HCT116 (cell line): ENCODE measurements at regions of chr1 and their contacts with region 1.

Region 1: GRCh38 chr1:86687595-86687994 is 16.8 kb upstream of the SH3GLB1 start:
- DNase-seq: no peak
- ATAC-seq: peak; percentile 42; the same call in 1 of the 2 replicates
- H3K4me3 ChIP-seq: no peak overlapping the region
- H3K27ac ChIP-seq: no peak overlapping the region
- H3K4me1 ChIP-seq: no peaks in the 10 kb centered on the region
- H3K27me3 ChIP-seq: no peaks in the 10 kb centered on the region
- CTCF ChIP-seq: peak in 1 of 3 experiments; percentile 59; a peak in 2 of 6 replicates
- POLR2A ChIP-seq: no peak
- RAD21 ChIP-seq: peak; percentile 59

Region 2: GRCh38 chr1:86380257-86380861 is 307.2 kb before region 1 on chr1:
- CTCF ChIA-PET with region 1: interaction called, 4 read pairs
- POLR2A ChIA-PET with region 1: no interaction called
- RAD21 ChIA-PET with region 1: no interaction called
- intact Hi-C with region 1: loop called (anchors 5 kb)
- DNase-seq: peak; percentile 71
- ATAC-seq: peak; percentile 61
- H3K4me3 ChIP-seq: no peak overlapping the region
- H3K27ac ChIP-seq: no peak overlapping the region
- H3K4me1 ChIP-seq: no peaks in the 10 kb centered on the region
- H3K27me3 ChIP-seq: no peaks in the 10 kb centered on the region
- CTCF ChIP-seq: peak; percentile 62 to 70 (median 70)
- POLR2A ChIP-seq: no peak
- RAD21 ChIP-seq: peak; percentile 80

Region 3: GRCh38 chr1:86419277-86419903 is 268.2 kb before region 1 on chr1:
- CTCF ChIA-PET with region 1: no interaction called
- POLR2A ChIA-PET with region 1: no interaction called
- RAD21 ChIA-PET with region 1: no interaction called
- intact Hi-C with region 1: loop called (anchors 5 kb)
- DNase-seq: no peak
- ATAC-seq: peak; percentile 92
- H3K4me3 ChIP-seq: no peak overlapping the region
- H3K27ac ChIP-seq: no peak overlapping the region
- H3K4me1 ChIP-seq: no peaks in the 10 kb centered on the region
- H3K27me3 ChIP-seq: no peaks in the 10 kb centered on the region
- CTCF ChIP-seq: peak; percentile 53 to 69 (median 64); a peak in 5 of 6 replicates
- POLR2A ChIP-seq: no peak
- RAD21 ChIP-seq: peak; percentile 66

Region 4: GRCh38 chr1:86470859-86471258 is 216.7 kb before region 1 on chr1:
- CTCF ChIA-PET with region 1: interaction called, 3 read pairs
- POLR2A ChIA-PET with region 1: no interaction called
- RAD21 ChIA-PET with region 1: no interaction called
- intact Hi-C with region 1: loop called (anchors 5 kb)
- DNase-seq: no peak
- ATAC-seq: no peak
- H3K4me3 ChIP-seq: no peak overlapping the region
- H3K27ac ChIP-seq: no peak overlapping the region
- H3K4me1 ChIP-seq: no peaks in the 10 kb centered on the region
- H3K27me3 ChIP-seq: no peaks in the 10 kb centered on the region
- CTCF ChIP-seq: no peak
- POLR2A ChIP-seq: no peak
- RAD21 ChIP-seq: no peak

Region 5: DNA sequence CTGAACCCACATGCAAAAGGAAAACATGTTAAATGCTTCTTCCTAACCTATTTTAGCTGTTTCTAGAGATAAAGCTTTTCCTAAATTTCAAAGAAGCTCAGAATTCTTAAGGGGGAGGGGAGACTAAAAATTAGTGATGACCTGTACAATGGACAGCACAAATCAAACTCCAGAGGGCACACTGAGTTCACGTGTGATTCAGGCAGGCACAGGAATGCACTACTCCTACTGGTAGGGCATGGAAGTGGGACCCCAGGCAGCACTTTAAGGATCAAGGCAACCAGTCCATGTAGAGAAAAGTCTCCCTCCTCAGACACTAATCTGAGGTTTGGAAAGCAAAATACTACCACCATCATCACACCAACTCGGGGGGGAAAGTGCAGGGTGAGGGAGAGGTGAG is 172.0 kb before region 1 on chr1:
- CTCF ChIA-PET with region 1: interaction called, 9 read pairs
- POLR2A ChIA-PET with region 1: no interaction called
- RAD21 ChIA-PET with region 1: no interaction called
- intact Hi-C with region 1: loop called (anchors 5 kb)
- DNase-seq: peak; percentile 62
- ATAC-seq: peak; percentile 97
- H3K4me3 ChIP-seq: no peak overlapping the region
- H3K27ac ChIP-seq: no peak overlapping the region
- H3K4me1 ChIP-seq: peaks cover 0 to 26% of the 10 kb centered on the region in 2 experiments; a peak in 2 of 4 replicates
- H3K27me3 ChIP-seq: no peaks in the 10 kb centered on the region
- CTCF ChIP-seq: peak; percentile 56 to 94 (median 60)
- POLR2A ChIP-seq: no peak
- RAD21 ChIP-seq: peak; percentile 81

Region 6: GRCh38 chr1:87853576-87854351 is 1166.2 kb after region 1 on chr1:
- CTCF ChIA-PET with region 1: no interaction called
- POLR2A ChIA-PET with region 1: no interaction called
- RAD21 ChIA-PET with region 1: no interaction called
- intact Hi-C with region 1: no loop called
- DNase-seq: no peak
- ATAC-seq: no peak
- H3K4me3 ChIP-seq: no peak overlapping the region
- H3K27ac ChIP-seq: no peak overlapping the region
- H3K4me1 ChIP-seq: no peaks in the 10 kb centered on the region
- H3K27me3 ChIP-seq: no peaks in the 10 kb centered on the region
- CTCF ChIP-seq: no peak
- POLR2A ChIP-seq: no peak
- RAD21 ChIP-seq: no peak